A549 (cell line): ENCODE measurements at regions of chr10 and their contacts with region 1.

Region 1: GRCh38 chr10:79195091-79195923 is 126.5 kb downstream of the ZMIZ1 start:
- DNase-seq: peak; percentile 77 to 88
- ATAC-seq: peak; percentile 77 to 87
- H3K4me3 ChIP-seq: no peak overlapping the region
- H3K27ac ChIP-seq: peak overlapping the region; percentile 75 to 88
- H3K4me1 ChIP-seq: peaks cover 50% of the 10 kb centered on the region
- CTCF ChIP-seq: peak; percentile 93
- EP300 ChIP-seq: no peak
- POLR2A ChIP-seq: no peak
- RAD21 ChIP-seq: peak; percentile 94 to 99

Region 2: DNA sequence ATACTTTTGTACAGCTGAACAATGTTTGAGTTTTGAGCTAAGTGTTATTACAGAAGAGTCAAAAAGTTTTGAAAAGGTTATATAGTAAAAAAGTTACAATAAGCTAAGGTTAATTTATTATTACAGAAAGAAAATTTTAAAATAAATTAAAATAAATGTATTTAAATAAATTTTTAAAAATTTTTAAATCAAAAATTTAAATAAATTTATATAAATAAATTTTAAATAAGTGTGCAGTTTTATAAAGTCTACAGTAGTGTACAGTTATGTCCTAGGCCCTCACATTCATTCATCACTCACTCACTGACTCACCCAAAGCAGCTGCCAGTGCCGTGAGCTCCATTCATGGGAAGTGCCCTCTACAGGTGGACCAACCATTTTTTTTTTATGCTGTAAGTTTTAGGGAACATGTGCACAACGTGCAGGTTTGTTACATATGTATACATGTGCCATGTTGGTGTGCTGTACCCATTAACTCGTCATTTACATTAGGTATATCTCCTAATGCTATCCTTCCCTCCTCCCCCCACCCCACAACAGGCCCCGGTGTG is 589.4 kb before region 1 on chr10:
- CTCF ChIA-PET with region 1: no interaction called
- POLR2A ChIA-PET with region 1: no interaction called
- DNase-seq: peak; percentile 21 to 67
- ATAC-seq: peak; percentile 87 to 92
- H3K4me3 ChIP-seq: no peak overlapping the region
- H3K27ac ChIP-seq: no peak overlapping the region
- H3K4me1 ChIP-seq: no peaks in the 10 kb centered on the region
- CTCF ChIP-seq: peak; percentile 34; the same call in 2 of the 3 replicates
- EP300 ChIP-seq: no peak
- POLR2A ChIP-seq: no peak
- RAD21 ChIP-seq: peak in 1 of 2 experiments; percentile 52; a peak in 2 of 5 replicates

Region 3: GRCh38 chr10:78960316-78960800 is 234.9 kb before region 1 on chr10:
- CTCF ChIA-PET with region 1: interaction called, 15 read pairs
- POLR2A ChIA-PET with region 1: no interaction called
- DNase-seq: no peak
- ATAC-seq: no peak
- H3K4me3 ChIP-seq: no peak overlapping the region
- H3K27ac ChIP-seq: peak overlapping the region in 1 of 2 experiments; percentile 35; a peak in 2 of 6 replicates
- H3K4me1 ChIP-seq: peaks cover 26% of the 10 kb centered on the region
- CTCF ChIP-seq: no peak
- EP300 ChIP-seq: no peak
- POLR2A ChIP-seq: no peak
- RAD21 ChIP-seq: no peak

Region 4: GRCh38 chr10:78995987-78996791 is 199.1 kb before region 1 on chr10:
- CTCF ChIA-PET with region 1: no interaction called
- POLR2A ChIA-PET with region 1: no interaction called
- DNase-seq: no peak
- ATAC-seq: no peak
- H3K4me3 ChIP-seq: no peak overlapping the region
- H3K27ac ChIP-seq: no peak overlapping the region
- H3K4me1 ChIP-seq: peaks cover 12% of the 10 kb centered on the region
- CTCF ChIP-seq: no peak
- EP300 ChIP-seq: no peak
- POLR2A ChIP-seq: no peak
- RAD21 ChIP-seq: no peak

Region 5: DNA sequence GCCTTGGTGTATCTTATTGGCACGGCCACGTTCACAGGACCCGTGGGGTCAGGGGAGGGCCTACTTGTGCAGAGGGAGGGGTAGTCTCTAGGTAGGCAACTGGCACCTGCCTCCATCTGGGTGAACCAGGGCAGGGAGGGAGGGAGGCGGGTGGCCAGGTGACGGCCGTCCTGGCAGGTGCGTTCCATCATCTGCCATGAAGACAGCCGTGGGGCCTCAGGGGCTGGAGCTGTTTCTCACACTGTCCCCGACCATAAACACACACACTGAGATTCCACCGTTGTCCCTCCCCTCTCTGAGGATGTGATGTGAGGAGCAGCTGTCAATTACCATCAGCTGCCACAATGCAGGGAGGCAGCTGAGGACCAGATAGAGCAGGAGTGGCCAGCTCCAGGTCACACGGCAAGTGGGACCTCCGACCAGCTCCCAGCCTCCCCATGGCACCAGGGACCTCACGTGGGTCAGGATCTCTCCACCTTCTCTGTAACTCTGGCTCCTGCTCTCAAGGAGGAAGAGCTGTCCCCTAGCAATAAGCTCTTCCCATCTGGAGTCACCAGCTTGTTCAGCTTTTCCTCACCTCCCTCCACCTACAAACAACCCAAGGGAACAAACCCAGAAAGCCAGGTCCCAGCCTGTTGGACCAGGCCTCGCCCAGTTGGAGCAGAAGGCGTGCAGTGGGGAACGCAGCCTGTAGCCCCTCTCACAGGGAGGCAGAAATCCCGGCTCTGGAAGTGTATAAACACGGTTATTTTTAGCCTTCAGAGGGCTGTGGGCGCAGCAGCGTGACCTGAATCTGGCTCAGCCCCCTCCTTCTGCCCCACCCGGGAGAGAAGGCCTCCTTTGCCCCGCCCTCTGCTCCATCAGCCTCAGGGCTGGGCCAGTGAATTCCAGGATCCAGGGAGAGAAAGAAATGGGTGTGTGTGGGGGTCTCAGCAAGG is 93.5 kb before region 1 on chr10:
- CTCF ChIA-PET with region 1: interaction called, 65 read pairs
- POLR2A ChIA-PET with region 1: no interaction called
- DNase-seq: no peak
- ATAC-seq: peak; percentile 4 to 56; a peak in 3 of 6 replicates
- H3K4me3 ChIP-seq: no peak overlapping the region
- H3K27ac ChIP-seq: peak overlapping the region; percentile 46 to 92; a peak in 5 of 6 replicates
- H3K4me1 ChIP-seq: peaks cover 98% of the 10 kb centered on the region
- CTCF ChIP-seq: no peak
- EP300 ChIP-seq: no peak
- POLR2A ChIP-seq: no peak
- RAD21 ChIP-seq: no peak

Region 6: GRCh38 chr10:79139124-79139835 is 56.0 kb before region 1 on chr10:
- CTCF ChIA-PET with region 1: interaction called, 121 read pairs
- POLR2A ChIA-PET with region 1: no interaction called
- DNase-seq: no peak
- ATAC-seq: no peak
- H3K4me3 ChIP-seq: no peak overlapping the region
- H3K27ac ChIP-seq: peak overlapping the region in 1 of 2 experiments; percentile 57; a peak in 3 of 6 replicates
- H3K4me1 ChIP-seq: peaks cover 58% of the 10 kb centered on the region
- CTCF ChIP-seq: no peak
- EP300 ChIP-seq: no peak
- POLR2A ChIP-seq: no peak
- RAD21 ChIP-seq: no peak

Region 7: GRCh38 chr10:79170993-79171392 is 24.3 kb before region 1 on chr10:
- CTCF ChIA-PET with region 1: interaction called, 199 read pairs
- POLR2A ChIA-PET with region 1: no interaction called
- DNase-seq: no peak
- ATAC-seq: no peak
- H3K4me3 ChIP-seq: no peak overlapping the region
- H3K27ac ChIP-seq: peak overlapping the region in 1 of 2 experiments; percentile 17; a peak in 2 of 6 replicates
- H3K4me1 ChIP-seq: peaks cover 43% of the 10 kb centered on the region
- CTCF ChIP-seq: no peak
- EP300 ChIP-seq: no peak
- POLR2A ChIP-seq: no peak
- RAD21 ChIP-seq: no peak

Region 8: DNA sequence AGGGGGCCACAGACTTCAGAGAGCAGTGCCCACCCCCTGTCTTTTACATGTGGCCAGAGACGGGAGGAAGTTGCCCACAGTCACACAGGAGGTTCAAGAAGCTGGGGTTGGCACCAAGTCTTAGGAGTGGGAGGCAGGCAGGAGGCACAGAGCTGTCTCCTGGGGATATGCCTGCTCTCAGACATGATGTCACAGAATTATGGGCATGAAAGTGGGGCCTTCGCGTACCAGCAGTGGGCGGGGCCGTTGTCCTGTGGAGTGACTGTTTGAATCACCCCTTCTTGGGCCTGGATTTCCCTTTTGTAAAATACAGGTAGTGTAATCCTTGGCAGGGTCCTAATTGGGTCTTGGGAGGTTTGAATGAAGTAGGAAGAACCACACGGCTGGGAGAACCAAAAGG is 70.8 kb after region 1 on chr10:
- CTCF ChIA-PET with region 1: no interaction called
- POLR2A ChIA-PET with region 1: no interaction called
- DNase-seq: no peak
- ATAC-seq: no peak
- H3K4me3 ChIP-seq: no peak overlapping the region
- H3K27ac ChIP-seq: no peak overlapping the region; a peak in 1 of 6 replicates
- H3K4me1 ChIP-seq: no peaks in the 10 kb centered on the region
- CTCF ChIP-seq: no peak
- EP300 ChIP-seq: no peak
- POLR2A ChIP-seq: no peak
- RAD21 ChIP-seq: no peak